Ovary (tissue), 10 donors: ENCODE measurements at regions of chr12 and their contacts with region 1.

Region 1: DNA sequence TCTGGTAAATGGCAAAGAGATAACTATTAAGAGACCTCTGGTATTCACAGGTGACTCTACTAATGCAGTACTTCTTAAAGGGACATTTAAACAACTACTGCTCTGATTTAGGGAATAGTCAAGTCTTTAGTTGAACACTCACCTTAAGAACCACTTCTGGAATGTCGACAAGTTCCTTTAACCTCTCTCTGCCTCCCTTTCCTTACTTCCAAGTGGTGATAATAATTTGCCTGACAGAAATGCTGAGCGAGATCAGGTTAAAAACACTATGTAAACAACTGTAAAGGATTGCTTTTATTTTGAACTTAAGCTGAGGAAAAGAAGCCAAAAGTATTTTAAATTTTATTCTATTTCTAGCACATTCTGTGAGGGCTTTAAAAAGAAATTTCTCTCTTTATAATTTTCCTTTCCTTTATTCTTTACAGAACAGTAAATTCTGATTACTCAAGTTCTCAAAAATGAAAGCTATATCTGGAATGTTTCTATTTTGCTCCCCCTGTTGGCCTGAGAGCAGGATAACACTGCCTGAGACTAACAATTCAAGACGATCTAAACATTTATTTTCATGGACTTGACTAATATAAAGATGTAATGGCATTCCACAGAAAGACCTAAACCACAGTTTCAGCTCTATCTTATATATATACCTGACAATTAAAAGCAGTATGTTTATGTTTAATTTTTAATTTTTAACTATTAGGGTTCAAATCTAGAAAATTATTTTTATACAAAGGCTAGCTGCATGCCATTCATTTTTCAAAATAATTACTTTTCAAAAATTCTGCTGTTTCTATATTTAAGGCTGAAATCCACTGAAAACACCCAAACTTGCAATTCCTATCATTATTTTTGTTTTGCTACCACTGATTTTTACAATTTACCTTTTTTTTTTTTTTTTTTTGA is 29.2 kb downstream of the ZCCHC8 start:
- DNase-seq: no peak
- H3K4me3 ChIP-seq: no peak overlapping the region
- H3K27ac ChIP-seq: peak overlapping the region in 1 of 2 donors; percentile 19
- H3K4me1 ChIP-seq: no peaks in the 10 kb centered on the region
- H3K27me3 ChIP-seq: no peaks in the 10 kb centered on the region
- CTCF ChIP-seq: peak; percentile 27 to 84 (median 79)
- EP300 ChIP-seq: no peak
- POLR2A ChIP-seq: no peak

Region 2: DNA sequence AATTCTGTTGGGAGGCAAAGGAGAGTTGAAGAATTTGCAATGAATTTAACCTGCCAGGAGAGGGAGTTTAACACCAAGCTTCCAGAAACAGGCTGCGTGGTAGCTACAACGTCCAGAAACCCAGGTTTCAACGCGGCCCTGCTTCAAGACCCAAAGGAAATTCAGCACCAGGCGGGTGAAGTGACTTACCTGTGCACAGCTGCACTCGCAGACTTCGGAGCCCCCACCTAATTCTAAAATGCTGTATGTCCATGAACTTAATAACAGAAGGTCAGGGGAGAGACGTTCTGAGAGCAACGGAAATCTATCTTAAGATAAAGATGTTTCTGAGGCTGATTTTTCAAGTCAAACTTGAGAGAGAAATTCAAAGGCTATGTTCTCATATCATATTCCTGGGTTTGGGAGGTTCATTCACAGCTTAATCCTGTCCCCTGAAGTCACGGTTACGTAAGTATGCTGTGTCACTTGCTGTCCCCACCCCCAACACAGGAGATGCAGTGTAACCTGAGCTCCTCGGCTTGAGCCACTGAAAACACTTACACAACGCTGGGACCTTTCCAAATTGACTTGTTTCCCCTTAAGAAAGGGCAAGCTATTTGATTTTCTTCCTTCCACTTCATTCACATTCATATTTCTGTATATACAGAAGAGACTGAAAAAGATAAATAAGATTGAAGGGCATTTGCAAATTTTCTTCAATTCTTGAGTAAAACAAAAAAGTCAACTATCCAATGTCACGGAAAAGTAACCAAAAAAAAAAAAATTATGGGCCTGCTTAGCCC is 71.8 kb before region 1 on chr12:
- intact Hi-C with region 1: loop called in 3 of 4 experiments (anchors 2 to 5 kb)
- DNase-seq: peak; percentile 51 to 71 (median 61)
- H3K4me3 ChIP-seq: peak overlapping the region; percentile 8
- H3K27ac ChIP-seq: peak overlapping the region; percentile 61 to 83
- H3K4me1 ChIP-seq: peaks cover 1% of the 10 kb centered on the region
- H3K27me3 ChIP-seq: no peaks in the 10 kb centered on the region
- CTCF ChIP-seq: peak in 2 of 3 donors; percentile 71 to 77
- EP300 ChIP-seq: no peak
- POLR2A ChIP-seq: no peak